ENCODE measurements at regions of chr4 and their contacts with region 1.

Region 1: GRCh38 chr4:105471566-105472176 is 2.2 kb downstream of the PPA2 start:
- DNase-seq: peak in 4 of 6 donors; percentile 44 to 71 (median 64)
- ATAC-seq: peak; percentile 46 to 72 (median 55)
- H3K4me3 ChIP-seq: peak overlapping the region in 2 of 4 donors; percentile 79 to 85
- H3K27ac ChIP-seq: peak overlapping the region in 1 of 4 donors; percentile 99
- H3K4me1 ChIP-seq: peaks cover 9 to 25% (median 10%) of the 10 kb centered on the region in 3 donors
- H3K27me3 ChIP-seq: no peaks in the 10 kb centered on the region
- CTCF ChIP-seq: peak in 3 of 4 donors; percentile 28 to 63 (median 57)

Region 2: GRCh38 chr4:105140684-105141490 is 330.8 kb before region 1 on chr4:
- intact Hi-C with region 1: loop called in 2 of 3 experiments (anchors 5 to 10 kb)
- DNase-seq: peak in 2 of 6 donors; percentile 6 to 32
- ATAC-seq: peak; percentile 56 to 87 (median 65)
- H3K4me3 ChIP-seq: no peak overlapping the region
- H3K27ac ChIP-seq: no peak overlapping the region
- H3K4me1 ChIP-seq: no peaks in the 10 kb centered on the region
- H3K27me3 ChIP-seq: no peaks in the 10 kb centered on the region
- CTCF ChIP-seq: peak in 3 of 4 donors; percentile 28 to 47 (median 33)

Region 3: GRCh38 chr4:105236202-105236915 is 235.3 kb before region 1 on chr4:
- intact Hi-C with region 1: no loop called
- DNase-seq: no peak
- ATAC-seq: no peak
- H3K4me3 ChIP-seq: no peak overlapping the region
- H3K27ac ChIP-seq: no peak overlapping the region
- H3K4me1 ChIP-seq: no peaks in the 10 kb centered on the region
- H3K27me3 ChIP-seq: no peaks in the 10 kb centered on the region
- CTCF ChIP-seq: no peak

Measured in pancreas (tissue), 10 donors.